ENCODE measurements at regions of chr3 and their contacts with region 1.

Region 1: DNA sequence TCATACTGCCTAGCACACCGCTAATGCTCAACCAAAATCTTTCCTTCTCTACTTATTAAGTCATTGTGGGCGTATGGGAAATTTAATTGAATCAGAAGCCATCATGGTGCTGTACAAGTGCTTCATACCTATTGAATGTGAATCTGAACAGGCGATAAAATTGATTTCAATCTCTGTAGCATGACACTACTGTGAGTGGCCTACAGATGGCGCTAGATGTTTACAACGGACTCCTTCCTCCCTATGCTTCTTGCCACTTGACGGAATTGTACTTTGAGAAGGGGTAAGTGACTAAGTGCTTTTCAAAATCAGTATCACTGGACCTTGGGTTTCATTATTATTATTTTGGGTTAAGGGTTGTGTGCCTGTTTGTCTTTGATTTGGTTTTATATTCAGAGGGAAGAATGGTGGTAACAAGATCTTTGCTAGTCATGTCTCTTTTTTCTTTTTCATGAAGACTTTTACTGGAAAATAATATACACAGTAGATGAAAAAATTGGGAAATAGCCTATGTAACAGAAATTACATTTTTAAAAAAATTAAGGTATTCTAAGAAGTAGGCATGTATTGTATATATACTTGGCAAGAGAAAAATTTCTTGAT is 35.4 kb downstream of the ACP3 start:
- DNase-seq: peak; percentile 84
- H3K4me3 Mint-ChIP-seq: no peak overlapping the region
- H3K27ac Mint-ChIP-seq: no peak overlapping the region
- H3K4me1 Mint-ChIP-seq: peaks cover 2% of the 10 kb centered on the region
- H3K27me3 Mint-ChIP-seq: no peaks in the 10 kb centered on the region

Region 2: GRCh38 chr3:132222868-132223538 is 129.6 kb before region 1 on chr3:
- CTCF ChIA-PET with region 1: no interaction called
- intact Hi-C with region 1: no loop called
- DNase-seq: no peak
- H3K4me3 Mint-ChIP-seq: no peak overlapping the region
- H3K27ac Mint-ChIP-seq: no peak overlapping the region
- H3K4me1 Mint-ChIP-seq: no peaks in the 10 kb centered on the region
- H3K27me3 Mint-ChIP-seq: peaks cover 5% of the 10 kb centered on the region

Region 3: DNA sequence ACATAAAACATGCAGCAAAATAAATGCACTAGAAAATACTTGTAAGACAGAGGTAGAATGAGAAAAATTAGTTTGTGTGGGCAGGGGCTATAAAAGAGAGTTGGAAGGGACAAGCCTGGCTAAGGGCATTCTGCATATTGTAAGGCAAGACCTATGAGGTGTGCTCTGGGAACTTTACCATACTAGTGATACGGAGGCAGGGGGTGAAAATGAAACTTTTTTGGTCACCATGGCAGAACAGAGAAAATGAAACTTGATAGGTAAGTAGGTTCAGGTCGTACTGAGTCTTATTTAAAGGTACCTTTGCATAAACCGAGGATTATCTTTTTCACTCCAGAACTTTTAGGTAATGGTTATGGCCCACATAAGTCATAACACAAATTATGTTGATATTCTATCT is 169.7 kb after region 1 on chr3:
- CTCF ChIA-PET with region 1: no interaction called
- intact Hi-C with region 1: no loop called
- DNase-seq: peak; percentile 7
- H3K4me3 Mint-ChIP-seq: no peak overlapping the region
- H3K27ac Mint-ChIP-seq: no peak overlapping the region
- H3K4me1 Mint-ChIP-seq: peaks cover 6% of the 10 kb centered on the region
- H3K27me3 Mint-ChIP-seq: no peaks in the 10 kb centered on the region

Region 4: DNA sequence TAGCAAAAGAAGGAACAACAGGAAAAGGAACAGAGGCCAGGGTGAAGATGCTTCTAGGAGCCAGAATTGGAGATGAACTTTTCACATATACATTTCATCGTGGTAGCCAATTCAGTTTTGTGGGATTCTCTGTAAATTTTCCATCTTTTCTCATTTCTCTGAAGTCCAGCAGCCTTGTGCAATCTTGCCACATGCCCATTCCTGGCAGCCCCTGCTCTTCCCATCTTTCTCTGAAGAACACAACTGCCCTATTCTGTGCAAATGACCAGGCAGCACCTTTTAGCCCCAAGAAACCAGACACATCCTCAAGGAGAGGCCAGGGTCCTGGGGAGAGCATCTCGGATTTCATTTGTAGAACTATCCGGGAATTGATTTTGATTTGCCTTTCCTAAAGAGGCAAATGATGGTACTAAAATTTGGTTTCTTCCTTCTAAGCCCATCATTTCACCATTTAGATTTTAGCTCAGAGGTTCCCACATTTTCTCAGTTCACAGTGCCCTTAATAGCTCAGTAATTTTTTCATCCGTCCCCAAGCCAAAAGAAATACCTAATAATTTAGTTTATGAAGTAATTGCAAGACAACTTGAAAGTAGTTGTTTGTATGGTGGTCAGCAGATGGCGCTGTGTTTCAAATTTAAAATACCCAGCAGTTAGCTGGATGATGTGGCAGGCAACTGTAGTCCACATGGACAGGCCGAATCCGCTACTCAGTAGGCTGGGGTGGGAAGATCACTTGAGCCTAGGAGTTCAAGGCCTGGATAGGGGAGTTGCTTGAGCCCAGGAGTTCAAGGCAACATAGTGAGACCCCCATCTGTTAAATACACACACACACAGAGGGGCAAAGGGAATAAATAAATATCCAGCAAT is 183.2 kb after region 1 on chr3:
- CTCF ChIA-PET with region 1: interaction called, 6 read pairs
- intact Hi-C with region 1: loop called (anchors 2 kb)
- DNase-seq: peak; percentile 71
- H3K4me3 Mint-ChIP-seq: no peak overlapping the region
- H3K27ac Mint-ChIP-seq: no peak overlapping the region
- H3K4me1 Mint-ChIP-seq: no peaks in the 10 kb centered on the region
- H3K27me3 Mint-ChIP-seq: no peaks in the 10 kb centered on the region

Region 5: GRCh38 chr3:132641837-132642538 is 289.3 kb after region 1 on chr3:
- CTCF ChIA-PET with region 1: interaction called, 15 read pairs
- intact Hi-C with region 1: loop called (anchors 1 kb)
- DNase-seq: no peak
- H3K4me3 Mint-ChIP-seq: no peak overlapping the region
- H3K27ac Mint-ChIP-seq: no peak overlapping the region
- H3K4me1 Mint-ChIP-seq: peaks cover 3% of the 10 kb centered on the region
- H3K27me3 Mint-ChIP-seq: no peaks in the 10 kb centered on the region

Region 6: GRCh38 chr3:133384331-133385027 is 1031.8 kb after region 1 on chr3:
- CTCF ChIA-PET with region 1: no interaction called
- intact Hi-C with region 1: loop called (anchors 5 kb)
- DNase-seq: peak; percentile 65
- H3K4me3 Mint-ChIP-seq: no peak overlapping the region
- H3K27ac Mint-ChIP-seq: no peak overlapping the region
- H3K4me1 Mint-ChIP-seq: no peaks in the 10 kb centered on the region
- H3K27me3 Mint-ChIP-seq: no peaks in the 10 kb centered on the region

Measured in activated naive CD4-positive, alpha-beta T cell treated with anti-CD3 and anti-CD28 coated beads for 36 hours (primary cell).